Posterior vena cava (tissue), 2 donors: ENCODE measurements at regions of chr12 and their contacts with region 1.

Region 1: GRCh38 chr12:115398311-115398781 is 714.4 kb upstream of the TBX3 start:
- DNase-seq: no peak

Region 2: GRCh38 chr12:113788020-113788856 is 1610.1 kb before region 1 on chr12:
- intact Hi-C with region 1: loop called in 1 of 2 experiments (anchors 5 kb)
- DNase-seq: no peak

Region 3: GRCh38 chr12:115380546-115381120 is 17.7 kb before region 1 on chr12:
- intact Hi-C with region 1: loop called in 1 of 2 experiments (anchors 1 kb)
- DNase-seq: no peak